ENCODE measurements at regions of chr2 and their contacts with region 1.

Region 1: DNA sequence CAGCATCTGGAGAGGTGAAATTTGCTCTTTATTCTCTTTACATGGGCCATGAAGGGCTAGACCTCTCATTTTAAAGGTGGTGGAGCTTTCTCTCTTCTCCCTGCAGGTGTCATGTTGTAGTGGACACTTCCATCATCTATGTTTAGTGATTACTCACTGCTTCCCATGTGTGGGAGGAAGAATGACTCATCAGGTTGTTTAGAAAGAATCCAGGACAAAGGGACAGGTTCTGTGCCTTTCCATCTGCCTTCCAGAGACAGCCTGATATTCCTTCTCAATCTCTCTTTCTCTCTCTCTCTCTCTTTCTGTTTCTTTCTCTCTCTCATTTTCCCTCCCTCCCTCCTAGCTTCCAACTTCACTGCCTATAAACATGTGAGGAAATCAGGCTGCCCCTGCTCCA is 38.7 kb downstream of the SCG2 start:
- DNase-seq: peak; percentile 60 to 99
- H3K4me3 ChIP-seq: peak overlapping the region; percentile 34
- H3K27ac ChIP-seq: peak overlapping the region; percentile 92
- H3K4me1 ChIP-seq: peaks cover 42% of the 10 kb centered on the region
- H3K27me3 ChIP-seq: no peaks in the 10 kb centered on the region
- CTCF ChIP-seq: peak; percentile 37; the same call in 1 of the 2 replicates

Region 2: GRCh38 chr2:223404616-223405015 is 158.8 kb before region 1 on chr2:
- CTCF ChIA-PET with region 1: interaction called, 15 read pairs
- POLR2A ChIA-PET with region 1: no interaction called
- intact Hi-C with region 1: no loop called
- DNase-seq: no peak
- H3K4me3 ChIP-seq: no peak overlapping the region
- H3K27ac ChIP-seq: no peak overlapping the region
- H3K4me1 ChIP-seq: no peaks in the 10 kb centered on the region
- H3K27me3 ChIP-seq: no peaks in the 10 kb centered on the region
- CTCF ChIP-seq: no peak

Region 3: DNA sequence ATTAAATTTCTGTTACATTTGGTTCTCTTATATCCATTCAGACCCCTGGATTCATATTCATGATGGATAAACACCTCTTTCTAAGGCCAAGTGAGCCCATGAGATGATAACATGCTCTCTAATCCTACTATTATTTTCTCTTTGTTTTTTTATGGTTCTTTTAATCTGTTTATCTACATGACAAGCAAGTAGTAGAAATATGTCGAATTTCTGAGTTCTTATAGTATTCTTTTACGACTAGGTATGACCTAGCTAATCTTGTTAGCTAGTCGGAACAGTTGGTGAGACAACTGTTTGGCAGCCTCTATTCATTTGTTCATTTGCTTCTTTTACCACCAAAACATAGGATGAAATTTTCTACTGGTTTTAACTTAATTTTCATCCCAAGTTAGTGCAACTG is 136.8 kb after region 1 on chr2:
- CTCF ChIA-PET with region 1: no interaction called
- POLR2A ChIA-PET with region 1: no interaction called
- intact Hi-C with region 1: no loop called
- DNase-seq: no peak
- H3K4me3 ChIP-seq: no peak overlapping the region
- H3K27ac ChIP-seq: peak overlapping the region; percentile 45
- H3K4me1 ChIP-seq: peaks cover 33% of the 10 kb centered on the region
- H3K27me3 ChIP-seq: no peaks in the 10 kb centered on the region
- CTCF ChIP-seq: no peak